Activated CD4-positive, alpha-beta T cell treated with anti-CD3 and anti-CD28 coated beads, Interleukin-2, amount 10 ng/mL, durations not matched to agents 24 days and 14 days (primary cell): ENCODE measurements at regions of chr11 and their contacts with region 1.

Region 1: DNA sequence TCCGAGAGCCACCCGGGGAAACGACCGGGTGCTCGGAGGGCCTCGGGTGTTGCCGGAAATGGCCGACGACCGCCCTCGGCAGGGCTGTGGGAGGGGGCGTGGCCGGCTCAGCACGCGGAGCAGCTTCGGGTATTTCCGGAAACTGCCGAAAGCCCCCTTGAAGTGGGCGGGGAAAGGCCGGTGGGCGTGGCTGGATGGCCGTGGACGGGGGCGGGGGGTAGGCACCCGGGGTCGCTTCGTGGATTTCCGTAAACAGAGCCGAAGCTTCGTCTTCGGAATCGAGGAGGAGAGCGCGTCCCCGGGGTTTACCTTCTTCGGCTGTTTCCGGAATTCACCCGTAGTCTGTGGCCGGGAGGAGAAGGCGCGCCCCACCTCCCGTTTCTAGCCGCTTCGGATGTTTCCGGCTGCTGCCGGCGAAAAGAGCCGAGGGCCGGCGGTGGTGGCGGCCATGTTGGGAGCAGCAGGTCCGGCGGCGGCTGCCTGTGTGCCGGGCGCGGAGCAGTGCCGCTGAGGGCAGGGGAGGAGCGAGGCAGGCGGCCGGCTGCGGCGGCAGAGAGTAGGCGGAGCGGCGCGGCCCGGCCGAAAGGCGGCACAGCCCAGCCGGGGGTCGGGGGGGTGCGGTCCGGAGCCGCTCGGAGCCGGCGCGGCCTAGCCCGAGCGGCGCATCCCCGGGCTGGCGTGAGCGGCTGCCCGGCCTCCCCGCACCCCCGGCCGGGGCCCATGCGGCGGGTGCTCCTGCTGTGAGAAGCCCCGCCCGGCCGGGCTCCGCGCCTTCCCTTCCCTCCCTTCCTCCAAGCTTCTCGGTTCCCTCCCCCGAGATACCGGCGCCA is at the start of gene MARK2:
- DNase-seq: peak; percentile 100
- H3K4me3 Mint-ChIP-seq: peak within 1 kb of the TSS; percentile 92
- H3K27ac Mint-ChIP-seq: peak within 1 kb of the TSS; percentile 94
- H3K4me1 Mint-ChIP-seq: peaks cover 49% of the 10 kb centered on the region
- H3K27me3 Mint-ChIP-seq: no peaks in the 10 kb centered on the region
- total RNA-seq, gene MARK2: 34.2 and 41.0 TPM in 2 replicates

Region 2: DNA sequence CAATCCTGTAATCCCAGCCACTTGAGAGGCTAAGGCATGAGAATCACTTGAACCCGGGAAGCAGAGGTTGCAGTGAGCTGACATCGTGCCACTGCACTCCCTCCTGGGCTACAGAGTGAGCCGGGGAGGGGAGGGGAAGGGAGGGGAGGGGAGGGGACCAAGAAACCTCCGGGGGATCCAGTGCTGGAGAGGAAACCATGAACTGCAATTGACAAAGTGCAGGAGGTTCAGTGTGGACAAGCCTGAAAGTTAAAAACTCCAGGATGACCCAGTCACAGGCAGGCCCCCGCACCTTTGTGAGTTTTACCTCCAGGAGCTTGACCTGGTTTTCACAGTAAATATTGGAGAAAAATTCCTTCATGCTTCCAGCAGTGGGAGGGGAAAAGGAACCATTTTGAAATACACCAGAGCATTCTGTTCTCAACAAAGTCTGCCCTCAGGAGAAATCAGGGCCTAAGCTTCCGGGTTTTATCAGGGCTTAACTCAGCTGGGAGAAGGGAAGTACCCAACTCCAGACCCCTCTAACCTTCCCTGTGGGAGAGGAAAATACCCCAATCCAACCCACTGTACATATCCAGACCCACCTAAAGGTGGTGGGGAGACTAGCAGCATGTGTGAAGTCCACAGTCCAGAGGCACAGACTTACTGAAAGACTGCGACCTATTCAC is 54.8 kb before region 1 on chr11:
- intact Hi-C with region 1: no loop called
- DNase-seq: no peak
- H3K4me3 Mint-ChIP-seq: no peak overlapping the region
- H3K27ac Mint-ChIP-seq: no peak overlapping the region
- H3K4me1 Mint-ChIP-seq: peaks cover 7% of the 10 kb centered on the region
- H3K27me3 Mint-ChIP-seq: peaks cover 11% of the 10 kb centered on the region

Region 3: GRCh38 chr11:63866211-63866610 is 27.3 kb after region 1 on chr11:
- intact Hi-C with region 1: loop called (anchors 1 kb)
- DNase-seq: peak; percentile 89
- H3K4me3 Mint-ChIP-seq: peak overlapping the region; percentile 64
- H3K27ac Mint-ChIP-seq: peak overlapping the region; percentile 54
- H3K4me1 Mint-ChIP-seq: peaks cover 63% of the 10 kb centered on the region
- H3K27me3 Mint-ChIP-seq: no peaks in the 10 kb centered on the region

Region 4: GRCh38 chr11:63888170-63889086 is 49.5 kb after region 1 on chr11:
- intact Hi-C with region 1: loop called (anchors 1 kb)
- DNase-seq: peak; percentile 89
- H3K4me3 Mint-ChIP-seq: peak overlapping the region; percentile 91
- H3K27ac Mint-ChIP-seq: peak overlapping the region; percentile 94
- H3K4me1 Mint-ChIP-seq: peaks cover 69% of the 10 kb centered on the region
- H3K27me3 Mint-ChIP-seq: no peaks in the 10 kb centered on the region

Region 5: DNA sequence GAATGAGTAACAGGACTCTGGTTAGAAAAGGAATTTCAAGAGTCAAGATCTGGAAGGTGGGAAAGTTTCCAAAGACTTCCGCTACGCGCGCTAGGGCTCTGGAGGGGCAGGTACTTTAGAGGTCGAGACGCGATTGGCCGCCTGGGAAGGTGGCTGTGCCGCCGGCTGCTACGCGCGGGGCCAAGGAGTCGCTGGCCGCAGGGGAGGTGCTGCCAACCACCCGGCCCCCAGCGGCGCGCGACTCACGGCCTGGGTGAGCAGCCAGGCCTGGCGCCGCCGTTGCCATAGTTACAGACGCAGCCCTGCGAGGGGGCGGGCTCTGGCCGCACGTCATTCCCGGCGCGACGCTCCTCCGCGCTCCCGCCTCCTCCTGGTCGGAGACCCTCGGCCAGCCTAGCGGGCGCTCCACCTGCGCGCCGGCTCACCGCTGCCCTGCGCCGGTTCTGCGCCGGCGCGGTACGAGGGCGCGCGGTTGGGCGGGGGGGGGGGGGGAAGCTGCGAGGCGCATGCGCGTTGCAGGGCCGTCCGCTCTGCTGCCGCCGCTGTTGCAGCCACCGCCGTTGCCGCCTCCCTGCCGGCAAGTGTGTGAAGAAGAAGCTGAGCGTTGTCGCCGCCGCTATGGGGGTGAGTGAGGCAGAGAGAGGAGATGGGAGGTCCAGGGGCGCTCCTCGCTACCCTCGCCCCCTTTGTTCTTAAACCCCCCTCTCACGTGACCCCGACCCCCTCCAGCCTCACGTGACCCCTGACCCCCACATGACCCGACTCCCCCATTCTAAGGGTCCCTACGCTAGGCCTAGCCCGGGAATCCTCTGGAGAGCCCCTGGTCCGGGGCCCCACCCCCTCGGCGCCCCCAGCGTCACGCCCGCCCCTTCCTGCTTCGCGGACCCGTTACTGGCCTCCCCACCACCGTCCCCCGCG is 99.8 kb after region 1 on chr11 and contains the start of gene NAA40:
- intact Hi-C with region 1: loop called (anchors 1 kb)
- DNase-seq: peak; percentile 97
- H3K4me3 Mint-ChIP-seq: peak within 1 kb of the TSS; percentile 87
- H3K27ac Mint-ChIP-seq: peak within 1 kb of the TSS; percentile 80
- H3K4me1 Mint-ChIP-seq: peaks cover 17% of the 10 kb centered on the region
- H3K27me3 Mint-ChIP-seq: no peaks in the 10 kb centered on the region
- total RNA-seq, gene NAA40: 26.1 and 26.9 TPM in 2 replicates

Region 6: GRCh38 chr11:63986156-63986931 is 147.5 kb after region 1 on chr11 and contains the start of gene OTUB1:
- intact Hi-C with region 1: loop called (anchors 5 kb)
- DNase-seq: peak; percentile 97
- H3K4me3 Mint-ChIP-seq: peak within 1 kb of the TSS; percentile 99
- H3K27ac Mint-ChIP-seq: peak within 1 kb of the TSS; percentile 97
- H3K4me1 Mint-ChIP-seq: peaks cover 29% of the 10 kb centered on the region
- H3K27me3 Mint-ChIP-seq: no peaks in the 10 kb centered on the region
- total RNA-seq, gene OTUB1: 105 and 115 TPM in 2 replicates